Psoas muscle (tissue), 8 donors: ENCODE measurements at regions of chr14 and their contacts with region 1.

Region 1: GRCh38 chr14:56579345-56580220 is at the start of gene TMEM260:
- DNase-seq: peak; percentile 85 to 92
- ATAC-seq: peak; percentile 96 to 98 (median 98)
- H3K4me3 ChIP-seq: peak within 1 kb of the TSS; percentile 100
- H3K27ac ChIP-seq: peak within 1 kb of the TSS; percentile 83
- H3K4me1 ChIP-seq: peaks cover 20% of the 10 kb centered on the region
- H3K27me3 ChIP-seq: no peaks in the 10 kb centered on the region
- CTCF ChIP-seq: peak; percentile 95
- total RNA-seq, gene TMEM260: 2.7 to 7.4 (median 4.5) TPM

Region 2: GRCh38 chr14:56608682-56609081 is 29.1 kb after region 1 on chr14:
- intact Hi-C with region 1: loop called in 1 of 2 experiments (anchors 1 kb)
- DNase-seq: no peak
- ATAC-seq: no peak
- H3K4me3 ChIP-seq: no peak overlapping the region
- H3K27ac ChIP-seq: no peak overlapping the region
- H3K4me1 ChIP-seq: no peaks in the 10 kb centered on the region
- H3K27me3 ChIP-seq: no peaks in the 10 kb centered on the region
- CTCF ChIP-seq: no peak

Region 3: GRCh38 chr14:56630707-56631106 is 51.1 kb after region 1 on chr14:
- intact Hi-C with region 1: loop called in 1 of 2 experiments (anchors 5 kb)
- DNase-seq: no peak
- ATAC-seq: peak in 1 of 4 donors; percentile 46
- H3K4me3 ChIP-seq: no peak overlapping the region
- H3K27ac ChIP-seq: no peak overlapping the region
- H3K4me1 ChIP-seq: peaks cover 7% of the 10 kb centered on the region
- H3K27me3 ChIP-seq: no peaks in the 10 kb centered on the region
- CTCF ChIP-seq: no peak